ENCODE measurements at regions of chr19 and their contacts with region 1.

Region 1: GRCh38 chr19:12994701-12995595 is at the start of gene NFIX:
- DNase-seq: peak in 3 of 4 donors; percentile 64 to 88 (median 69)
- ATAC-seq: peak; percentile 23
- H3K4me3 ChIP-seq: peak within 1 kb of the TSS; percentile 61 to 63
- H3K27ac ChIP-seq: peak within 1 kb of the TSS; percentile 81 to 84
- H3K4me1 ChIP-seq: peaks cover 11 to 26% of the 10 kb centered on the region in 2 donors
- H3K27me3 ChIP-seq: peaks cover 0 to 23% of the 10 kb centered on the region in 2 donors
- CTCF ChIP-seq: no peak
- polyA plus RNA-seq, gene NFIX: 92.6 to 139 (median 111) TPM

Region 2: GRCh38 chr19:13051267-13052165 is 56.6 kb after region 1 on chr19:
- intact Hi-C with region 1: loop called in 1 of 2 experiments (anchors 10 kb)
- DNase-seq: peak in 3 of 4 donors; percentile 77 to 92 (median 83)
- ATAC-seq: peak; percentile 69
- H3K4me3 ChIP-seq: no peak overlapping the region
- H3K27ac ChIP-seq: peak overlapping the region; percentile 86 to 96
- H3K4me1 ChIP-seq: peaks cover 57 to 59% of the 10 kb centered on the region in 2 donors
- H3K27me3 ChIP-seq: no peaks in the 10 kb centered on the region
- CTCF ChIP-seq: no peak

Measured in left lung (tissue), 14 donors.